HCT116 (cell line): ENCODE measurements at regions of chr1 and their contacts with region 1.

Region 1: GRCh38 chr1:203572134-203572625 is 54.5 kb upstream of the ATP2B4 start:
- DNase-seq: no peak
- ATAC-seq: no peak
- H3K4me3 ChIP-seq: no peak overlapping the region
- H3K27ac ChIP-seq: no peak overlapping the region
- H3K4me1 ChIP-seq: no peaks in the 10 kb centered on the region
- H3K27me3 ChIP-seq: no peaks in the 10 kb centered on the region
- CTCF ChIP-seq: no peak
- POLR2A ChIP-seq: no peak
- RAD21 ChIP-seq: no peak

Region 2: GRCh38 chr1:203553506-203553905 is 18.7 kb before region 1 on chr1:
- CTCF ChIA-PET with region 1: no interaction called
- POLR2A ChIA-PET with region 1: no interaction called
- RAD21 ChIA-PET with region 1: no interaction called
- intact Hi-C with region 1: loop called (anchors 2 kb)
- DNase-seq: no peak
- ATAC-seq: no peak
- H3K4me3 ChIP-seq: no peak overlapping the region
- H3K27ac ChIP-seq: no peak overlapping the region
- H3K4me1 ChIP-seq: peaks cover 7 to 13% of the 10 kb centered on the region in 2 experiments
- H3K27me3 ChIP-seq: no peaks in the 10 kb centered on the region
- CTCF ChIP-seq: no peak
- POLR2A ChIP-seq: no peak
- RAD21 ChIP-seq: no peak